Ovary (tissue), 10 donors: ENCODE measurements at regions of chr2 and their contacts with region 1.

Region 1: DNA sequence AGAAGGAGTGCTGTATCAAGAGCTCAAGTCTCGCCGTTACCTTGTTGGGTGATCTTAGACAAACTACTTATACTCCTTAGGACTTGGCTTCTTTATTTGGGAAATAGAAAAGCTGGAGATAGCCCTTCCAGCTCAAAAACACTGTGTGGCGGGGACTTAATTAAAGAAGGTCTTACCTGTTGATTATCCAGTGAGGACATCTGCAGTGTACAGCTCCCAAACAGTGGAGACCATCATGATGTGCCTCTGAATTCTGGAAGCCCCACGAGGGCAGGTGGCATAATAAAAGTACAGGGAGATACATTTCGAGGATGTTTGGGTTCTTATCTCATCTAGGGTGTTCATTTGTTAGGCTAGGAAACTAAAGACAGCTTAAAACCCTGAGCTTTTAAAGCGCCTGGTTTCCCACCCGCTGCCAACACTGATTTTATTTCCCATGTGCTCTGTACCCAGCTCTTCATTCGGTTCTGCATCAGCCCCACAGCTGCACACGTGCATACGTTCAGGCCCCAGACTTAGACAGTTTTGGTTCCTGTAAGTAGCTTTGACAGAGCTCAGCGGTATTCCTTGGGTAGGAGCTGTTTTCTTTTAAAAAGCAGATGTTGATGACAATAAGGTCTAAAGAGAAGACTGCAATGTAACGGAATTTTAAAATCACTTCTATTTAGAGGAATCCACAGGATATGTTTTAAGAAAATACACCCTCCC is 80.5 kb upstream of the SIX2 start:
- DNase-seq: no peak
- H3K4me3 ChIP-seq: no peak overlapping the region
- H3K27ac ChIP-seq: no peak overlapping the region
- H3K4me1 ChIP-seq: no peaks in the 10 kb centered on the region
- H3K27me3 ChIP-seq: no peaks in the 10 kb centered on the region
- CTCF ChIP-seq: no peak
- EP300 ChIP-seq: no peak
- POLR2A ChIP-seq: no peak

Region 2: DNA sequence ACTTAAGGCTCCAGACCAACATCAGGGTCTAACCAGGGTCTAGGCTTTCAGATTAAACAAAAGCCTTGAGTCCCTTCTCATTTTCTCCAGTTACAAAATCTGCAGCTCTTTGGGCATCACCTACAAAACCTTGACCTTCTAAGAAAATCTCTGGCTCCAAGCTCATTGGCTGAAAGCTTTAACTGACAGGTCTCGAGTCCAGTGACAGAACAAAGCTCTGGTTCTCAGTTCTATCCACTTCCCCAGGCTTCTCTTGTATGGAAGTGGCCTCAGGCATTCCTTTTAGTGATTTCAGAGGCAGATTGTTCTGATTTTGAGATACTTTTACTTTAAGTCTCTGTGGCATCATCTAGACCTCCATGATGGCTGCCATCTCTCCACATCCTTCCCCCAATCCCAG is 91.7 kb before region 1 on chr2:
- intact Hi-C with region 1: loop called in 1 of 4 experiments (anchors 5 kb)
- DNase-seq: no peak
- H3K4me3 ChIP-seq: no peak overlapping the region
- H3K27ac ChIP-seq: no peak overlapping the region
- H3K4me1 ChIP-seq: peaks cover 1% of the 10 kb centered on the region
- H3K27me3 ChIP-seq: no peaks in the 10 kb centered on the region
- CTCF ChIP-seq: no peak
- EP300 ChIP-seq: no peak
- POLR2A ChIP-seq: no peak

Region 3: DNA sequence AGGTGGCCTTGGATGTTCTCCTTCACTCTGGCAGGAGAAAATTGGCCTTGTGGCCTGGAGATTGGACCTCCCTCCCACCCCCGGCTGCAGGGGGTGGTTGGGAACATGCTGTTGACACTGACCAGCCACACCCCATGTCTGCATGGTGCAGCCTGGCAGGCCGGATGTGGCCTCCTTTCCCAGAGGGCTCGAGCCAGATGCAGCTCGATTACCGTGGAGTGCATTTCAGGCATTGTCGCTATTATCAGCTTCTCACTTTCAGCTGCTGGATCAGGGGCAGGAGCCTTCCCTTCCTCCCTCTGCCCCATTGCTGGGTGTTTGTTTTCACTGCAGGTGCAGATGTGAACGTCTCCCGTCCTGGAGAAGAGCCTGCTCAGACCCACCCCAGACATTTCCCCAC is 130.5 kb after region 1 on chr2:
- intact Hi-C with region 1: no loop called
- DNase-seq: no peak
- H3K4me3 ChIP-seq: no peak overlapping the region
- H3K27ac ChIP-seq: no peak overlapping the region
- H3K4me1 ChIP-seq: peaks cover 3% of the 10 kb centered on the region
- H3K27me3 ChIP-seq: no peaks in the 10 kb centered on the region
- CTCF ChIP-seq: no peak
- EP300 ChIP-seq: no peak
- POLR2A ChIP-seq: no peak

Region 4: GRCh38 chr2:45616662-45617411 is 527.1 kb after region 1 on chr2:
- intact Hi-C with region 1: no loop called
- DNase-seq: no peak
- H3K4me3 ChIP-seq: no peak overlapping the region
- H3K27ac ChIP-seq: no peak overlapping the region
- H3K4me1 ChIP-seq: no peaks in the 10 kb centered on the region
- H3K27me3 ChIP-seq: no peaks in the 10 kb centered on the region
- CTCF ChIP-seq: no peak
- EP300 ChIP-seq: no peak
- POLR2A ChIP-seq: no peak